Panc1 (cell line): ENCODE measurements at regions of chr5 and their contacts with region 1.

Region 1: GRCh38 chr5:90015584-90016018 is 394.0 kb downstream of the CETN3 start:
- DNase-seq: no peak
- ATAC-seq: no peak
- H3K4me3 ChIP-seq: no peak overlapping the region
- H3K27ac ChIP-seq: no peak overlapping the region
- H3K4me1 ChIP-seq: peaks cover 3% of the 10 kb centered on the region
- H3K27me3 ChIP-seq: no peaks in the 10 kb centered on the region
- CTCF ChIP-seq: no peak

Region 2: DNA sequence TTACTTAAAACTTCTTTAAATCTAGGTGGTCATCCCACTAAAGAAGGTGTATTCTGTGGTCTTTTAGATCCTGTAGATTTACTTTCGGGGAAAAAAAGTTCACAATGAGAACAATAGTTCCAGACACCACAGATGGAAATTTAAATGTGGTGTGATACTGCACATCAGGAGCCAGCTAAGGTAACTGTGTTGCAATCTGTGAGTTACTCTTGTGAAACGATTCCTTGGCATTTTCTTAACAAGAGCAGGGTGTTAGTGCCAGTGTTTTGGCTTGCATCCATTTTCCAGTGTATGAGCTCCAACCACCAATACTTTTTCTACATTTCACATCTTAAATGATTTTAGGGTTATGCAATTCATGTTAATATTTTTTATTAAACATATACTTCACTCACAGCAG is 280.5 kb before region 1 on chr5:
- CTCF ChIA-PET with region 1: no interaction called
- POLR2A ChIA-PET with region 1: no interaction called
- in situ Hi-C with region 1: no loop called
- intact Hi-C with region 1: loop called (anchors 5 kb)
- DNase-seq: no peak
- ATAC-seq: no peak
- H3K4me3 ChIP-seq: no peak overlapping the region
- H3K27ac ChIP-seq: no peak overlapping the region
- H3K4me1 ChIP-seq: no peaks in the 10 kb centered on the region
- H3K27me3 ChIP-seq: no peaks in the 10 kb centered on the region
- CTCF ChIP-seq: no peak

Region 3: DNA sequence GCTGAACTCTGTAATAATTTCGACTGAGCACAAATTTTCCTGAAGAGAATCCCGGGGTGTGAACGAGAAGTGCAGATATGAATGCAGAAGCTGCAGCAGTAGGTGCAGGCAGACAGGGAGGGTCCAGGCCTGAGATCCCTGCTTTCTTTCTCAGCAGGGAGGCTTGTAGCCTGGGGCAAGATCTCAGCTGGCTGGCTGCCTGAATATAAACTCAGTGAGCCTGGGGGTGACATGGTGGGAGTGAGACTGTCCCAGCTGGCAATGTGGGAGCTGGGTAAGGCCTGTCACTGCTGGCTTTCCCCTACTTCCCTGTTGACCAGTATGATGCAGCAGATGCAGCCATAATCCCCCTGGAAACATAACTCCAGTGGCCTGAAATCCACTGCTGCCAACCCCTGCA is 68.7 kb after region 1 on chr5:
- CTCF ChIA-PET with region 1: no interaction called
- POLR2A ChIA-PET with region 1: no interaction called
- in situ Hi-C with region 1: no loop called
- intact Hi-C with region 1: no loop called
- DNase-seq: no peak
- ATAC-seq: no peak
- H3K4me3 ChIP-seq: no peak overlapping the region
- H3K27ac ChIP-seq: no peak overlapping the region
- H3K4me1 ChIP-seq: no peaks in the 10 kb centered on the region
- H3K27me3 ChIP-seq: no peaks in the 10 kb centered on the region
- CTCF ChIP-seq: no peak

Region 4: GRCh38 chr5:90612919-90613318 is 597.3 kb after region 1 on chr5:
- CTCF ChIA-PET with region 1: no interaction called
- POLR2A ChIA-PET with region 1: no interaction called
- in situ Hi-C with region 1: no loop called
- intact Hi-C with region 1: no loop called
- DNase-seq: no peak
- ATAC-seq: no peak
- H3K4me3 ChIP-seq: no peak overlapping the region
- H3K27ac ChIP-seq: no peak overlapping the region
- H3K4me1 ChIP-seq: no peaks in the 10 kb centered on the region
- H3K27me3 ChIP-seq: peaks cover 19% of the 10 kb centered on the region
- CTCF ChIP-seq: no peak